SK-N-SH (cell line): ENCODE measurements at regions of chr5 and their contacts with region 1.

Region 1: DNA sequence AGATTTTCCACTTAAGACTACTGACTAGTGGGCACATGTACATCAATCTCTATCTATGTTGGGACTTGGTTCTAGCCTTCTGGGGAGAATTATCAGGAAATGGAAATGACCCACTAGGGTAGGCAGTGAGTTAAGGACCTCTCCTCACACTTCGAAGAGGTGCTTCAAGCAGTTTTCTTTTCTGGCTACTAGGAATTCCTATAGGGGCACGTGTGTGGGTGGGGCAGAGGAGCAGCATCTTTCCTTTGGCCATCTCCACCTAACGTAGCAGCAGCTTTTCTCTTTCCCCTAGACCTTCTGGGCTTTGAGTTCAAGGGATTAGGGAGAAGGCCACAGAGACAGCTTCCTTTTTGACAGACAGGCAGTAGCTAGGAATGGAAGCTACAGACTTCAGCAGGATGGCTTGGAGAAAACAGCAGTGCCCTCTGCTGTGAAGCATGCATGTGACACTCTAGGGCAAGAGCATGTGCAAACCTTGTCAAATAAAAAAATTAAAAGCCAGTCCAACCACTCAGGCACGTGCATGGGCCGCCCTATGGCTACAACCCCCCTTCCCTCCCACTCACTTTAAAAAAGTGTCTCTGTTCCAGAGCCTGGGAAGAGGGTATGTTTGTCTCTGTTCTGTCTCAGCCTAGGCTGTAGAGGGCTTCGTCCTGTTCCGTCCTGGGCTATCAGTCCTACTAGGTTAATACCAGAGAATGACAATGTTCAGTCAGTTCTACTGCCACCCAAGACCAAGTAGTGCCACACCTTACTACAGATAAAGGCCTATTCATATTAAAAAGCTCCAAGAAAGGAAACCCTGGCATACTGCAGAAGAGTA is 8.7 kb upstream of the GFRA3 start:
- DNase-seq: peak; percentile 74
- H3K4me3 ChIP-seq: no peak overlapping the region; a peak in 1 of 4 replicates
- H3K27ac ChIP-seq: no peak overlapping the region
- H3K4me1 ChIP-seq: no peaks in the 10 kb centered on the region; a peak in 1 of 4 replicates
- H3K27me3 ChIP-seq: no peaks in the 10 kb centered on the region
- CTCF ChIP-seq: peak; percentile 63
- EP300 ChIP-seq: no peak
- RAD21 ChIP-seq: peak; percentile 97

Region 2: DNA sequence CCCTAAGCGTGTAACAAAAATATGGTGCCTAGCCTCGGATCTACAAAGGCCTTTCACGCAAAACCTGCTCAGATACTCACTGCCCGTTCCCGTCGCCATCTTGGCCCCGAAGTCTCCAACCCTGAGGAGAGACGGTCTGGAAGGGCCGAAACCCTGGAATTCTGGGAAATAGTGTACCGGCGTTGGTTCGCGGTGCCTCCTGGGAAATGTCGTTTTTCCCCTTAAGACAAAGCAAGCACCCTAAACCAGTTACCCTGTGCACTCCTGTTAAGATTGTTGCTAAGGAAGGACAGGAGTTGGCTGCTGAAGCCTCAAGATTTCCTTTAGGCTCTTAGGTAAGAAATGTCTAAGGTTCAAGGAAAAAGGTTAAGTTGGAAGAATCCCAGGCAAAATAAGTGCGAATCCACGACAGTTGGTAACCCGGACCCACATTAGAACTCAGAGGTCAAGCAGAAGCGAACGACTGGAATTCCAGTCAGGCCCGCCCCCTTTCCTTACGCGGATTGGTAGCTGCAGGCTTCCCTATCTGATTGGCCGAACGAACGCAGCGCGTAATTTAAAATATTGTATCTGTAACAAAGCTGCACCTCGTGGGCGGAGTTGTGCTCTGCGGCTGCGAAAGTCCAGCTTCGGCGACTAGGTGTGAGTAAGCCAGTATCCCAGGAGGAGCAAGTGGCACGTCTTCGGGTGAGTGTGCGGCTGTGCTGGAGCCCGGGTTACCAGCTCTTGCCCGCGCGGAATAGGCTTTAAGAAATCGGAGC is 104.4 kb before region 1 on chr5 and contains the starts of genes BRD8 and KIF20A:
- CTCF ChIA-PET with region 1: interaction called, 13 read pairs
- POLR2A ChIA-PET with region 1: no interaction called
- DNase-seq: peak; percentile 87
- H3K4me3 ChIP-seq: peak within 1 kb of the TSS; percentile 81 to 90
- H3K27ac ChIP-seq: peak within 1 kb of the TSS; percentile 86 to 97
- H3K4me1 ChIP-seq: peaks cover 0 to 13% of the 10 kb centered on the region in 2 experiments; a peak in 2 of 4 replicates
- H3K27me3 ChIP-seq: no peaks in the 10 kb centered on the region
- CTCF ChIP-seq: no peak
- EP300 ChIP-seq: peak in 1 of 2 experiments; percentile 19; a peak in 1 of 4 replicates
- RAD21 ChIP-seq: no peak
- polyA plus RNA-seq, gene BRD8: 46.2 and 64.4 TPM in 2 replicates
- polyA plus RNA-seq, gene KIF20A: 16.0 and 17.4 TPM in 2 replicates

Region 3: DNA sequence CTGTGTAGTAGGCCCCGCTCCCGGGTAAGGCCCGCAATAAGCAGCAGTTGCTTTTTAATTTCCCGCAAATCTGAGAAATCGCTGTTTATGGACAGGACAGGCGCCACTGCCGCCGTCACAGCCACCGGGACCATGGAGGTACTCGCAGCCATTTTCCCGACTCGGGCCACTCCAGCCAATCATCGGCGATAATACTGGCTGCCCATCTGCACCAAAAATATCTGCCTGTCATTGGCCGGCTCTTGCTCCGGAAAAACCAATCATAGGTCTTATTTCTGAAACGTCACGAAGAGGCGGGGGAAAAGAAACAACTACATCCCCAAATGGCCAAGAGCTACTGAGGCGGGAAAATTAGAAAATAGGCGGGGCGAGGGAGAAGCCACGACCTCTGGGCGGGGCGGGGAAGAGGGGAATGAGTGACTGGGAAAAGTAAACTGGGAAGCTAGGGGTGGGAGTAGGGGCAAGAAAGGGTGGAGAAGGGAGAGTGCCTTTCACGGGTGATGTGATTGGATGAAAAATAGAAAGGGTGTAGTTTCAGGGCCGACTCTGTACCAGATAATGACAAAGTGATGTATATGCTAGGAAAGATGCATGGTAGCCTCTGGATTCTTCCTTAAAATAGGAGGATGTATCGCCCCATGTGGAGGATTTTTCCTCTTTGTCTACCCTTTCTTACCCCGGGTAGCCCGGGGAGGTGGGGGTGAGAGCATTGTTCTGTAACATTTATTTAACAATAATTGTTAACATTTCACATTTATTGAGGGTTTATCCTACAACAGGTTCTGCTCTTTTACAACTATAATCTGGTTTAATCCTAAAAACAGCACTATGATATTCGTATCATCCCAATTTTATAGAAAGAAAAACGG is 69.7 kb before region 1 on chr5 and contains the start of gene CDC23:
- CTCF ChIA-PET with region 1: interaction called, 12 read pairs
- POLR2A ChIA-PET with region 1: no interaction called
- DNase-seq: peak; percentile 92
- H3K4me3 ChIP-seq: peak within 1 kb of the TSS; percentile 79 to 95
- H3K27ac ChIP-seq: peak within 1 kb of the TSS; percentile 56 to 64
- H3K4me1 ChIP-seq: peaks cover 5 to 12% of the 10 kb centered on the region in 2 experiments; a peak in 2 of 4 replicates
- H3K27me3 ChIP-seq: no peaks in the 10 kb centered on the region
- CTCF ChIP-seq: no peak
- EP300 ChIP-seq: no peak
- RAD21 ChIP-seq: no peak
- polyA plus RNA-seq, gene CDC23: 20.2 and 31.5 TPM in 2 replicates

Region 4: DNA sequence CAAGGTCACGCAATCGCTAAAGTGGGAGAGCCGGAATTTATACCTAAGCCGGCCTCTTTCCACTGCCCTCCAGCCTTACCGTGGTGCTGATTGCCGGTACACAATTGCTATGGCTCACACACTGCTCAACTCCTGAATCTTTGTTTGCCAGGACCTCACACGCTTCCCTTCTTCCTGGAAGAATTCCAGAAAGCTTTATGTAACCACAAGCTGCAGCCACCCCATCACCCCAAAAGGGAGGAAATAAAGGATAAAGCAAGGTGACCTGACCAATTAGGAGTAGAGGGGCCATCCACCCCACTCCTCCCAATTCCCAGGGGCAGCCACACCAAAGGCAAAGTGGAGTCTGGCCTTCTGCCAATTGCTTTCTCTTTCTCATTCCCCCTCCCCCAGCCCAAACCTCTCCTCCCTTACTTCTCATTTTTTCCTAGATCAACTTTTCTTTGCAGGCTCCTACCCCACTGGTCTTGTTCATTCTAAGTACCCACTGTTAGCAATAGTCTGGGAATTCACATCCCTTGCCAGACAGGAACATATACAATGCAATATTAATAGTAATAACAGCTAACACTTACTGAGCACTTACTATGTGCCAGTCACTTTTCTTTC is 52.0 kb before region 1 on chr5:
- CTCF ChIA-PET with region 1: interaction called, 125 read pairs
- POLR2A ChIA-PET with region 1: no interaction called
- DNase-seq: no peak
- H3K4me3 ChIP-seq: no peak overlapping the region
- H3K27ac ChIP-seq: no peak overlapping the region
- H3K4me1 ChIP-seq: peaks cover 0 to 9% of the 10 kb centered on the region in 2 experiments; a peak in 1 of 4 replicates
- H3K27me3 ChIP-seq: no peaks in the 10 kb centered on the region
- CTCF ChIP-seq: no peak
- EP300 ChIP-seq: no peak
- RAD21 ChIP-seq: no peak

Region 5: GRCh38 chr5:138241688-138242571 is 41.2 kb before region 1 on chr5:
- CTCF ChIA-PET with region 1: interaction called, 27 read pairs
- POLR2A ChIA-PET with region 1: no interaction called
- DNase-seq: peak; percentile 87
- H3K4me3 ChIP-seq: peak overlapping the region; percentile 44 to 52
- H3K27ac ChIP-seq: no peak overlapping the region
- H3K4me1 ChIP-seq: peaks cover 0 to 10% of the 10 kb centered on the region in 2 experiments; a peak in 1 of 4 replicates
- H3K27me3 ChIP-seq: peaks cover 16% of the 10 kb centered on the region; the same call in 1 of the 2 replicates
- CTCF ChIP-seq: no peak
- EP300 ChIP-seq: no peak
- RAD21 ChIP-seq: no peak

Region 6: GRCh38 chr5:138503487-138504270 is 220.5 kb after region 1 on chr5:
- CTCF ChIA-PET with region 1: no interaction called
- POLR2A ChIA-PET with region 1: no interaction called
- DNase-seq: peak; percentile 70
- H3K4me3 ChIP-seq: no peak overlapping the region
- H3K27ac ChIP-seq: peak overlapping the region in 1 of 2 experiments; percentile 30; a peak in 1 of 4 replicates
- H3K4me1 ChIP-seq: peaks cover 0 to 6% of the 10 kb centered on the region in 2 experiments; a peak in 1 of 4 replicates
- H3K27me3 ChIP-seq: no peaks in the 10 kb centered on the region
- CTCF ChIP-seq: peak; percentile 80
- EP300 ChIP-seq: no peak
- RAD21 ChIP-seq: peak; percentile 90